CD4-positive, alpha-beta T cell (primary cell): ENCODE measurements at regions of chr6 and their contacts with region 1.

Region 1: DNA sequence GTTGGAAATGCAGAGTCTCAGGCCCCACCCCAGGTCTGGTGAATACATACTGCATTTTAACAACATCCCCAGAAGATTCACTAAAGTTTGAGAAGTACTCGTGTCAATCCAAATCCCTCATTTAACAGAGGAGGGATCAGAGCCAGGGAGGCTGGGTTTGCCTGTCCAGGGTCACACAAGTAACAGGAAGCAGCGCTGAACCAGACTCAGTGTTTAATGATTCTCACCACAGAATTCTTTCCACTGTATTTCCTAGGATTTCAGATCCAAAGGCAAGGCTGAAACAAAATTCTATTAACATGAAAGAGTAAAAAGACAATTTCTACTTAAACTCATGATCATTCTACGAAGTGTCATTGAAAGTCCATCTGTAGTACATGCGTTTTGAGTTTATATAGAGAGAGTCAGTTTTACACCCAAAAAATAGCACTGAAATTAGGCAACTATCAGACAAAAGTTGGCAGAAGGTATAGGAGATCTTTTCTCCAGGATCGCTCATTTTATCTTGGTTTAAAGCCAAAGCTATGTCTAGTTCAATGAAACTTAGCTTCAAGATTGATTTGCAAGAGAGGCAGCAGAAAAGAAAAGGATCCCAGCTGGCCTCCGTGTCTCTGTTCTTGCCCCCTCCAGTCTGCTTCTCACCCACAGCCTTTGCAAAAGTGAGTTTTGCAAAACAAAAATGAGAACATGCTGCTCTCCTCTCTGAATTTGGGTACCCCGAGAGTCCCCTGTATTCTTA is 6.0 kb upstream of the AGPAT4 start:
- DNase-seq: no peak
- ATAC-seq: no peak
- H3K4me3 ChIP-seq: no peak overlapping the region
- H3K4me3 Mint-ChIP-seq: no peak overlapping the region
- H3K27ac ChIP-seq: no peak overlapping the region
- H3K27ac Mint-ChIP-seq: no peak overlapping the region
- H3K4me1 ChIP-seq: no peaks in the 10 kb centered on the region
- H3K4me1 Mint-ChIP-seq: no peaks in the 10 kb centered on the region
- H3K27me3 ChIP-seq: no peaks in the 10 kb centered on the region
- H3K27me3 Mint-ChIP-seq: no peaks in the 10 kb centered on the region
- CTCF ChIP-seq: no peak

Region 2: GRCh38 chr6:161308075-161308655 is 28.3 kb after region 1 on chr6:
- CTCF ChIA-PET with region 1: no interaction called
- POLR2A ChIA-PET with region 1: no interaction called
- intact Hi-C with region 1: no loop called
- DNase-seq: no peak
- ATAC-seq: no peak
- H3K4me3 ChIP-seq: no peak overlapping the region
- H3K4me3 Mint-ChIP-seq: no peak overlapping the region
- H3K27ac ChIP-seq: no peak overlapping the region
- H3K27ac Mint-ChIP-seq: no peak overlapping the region
- H3K4me1 ChIP-seq: no peaks in the 10 kb centered on the region
- H3K4me1 Mint-ChIP-seq: no peaks in the 10 kb centered on the region
- H3K27me3 ChIP-seq: no peaks in the 10 kb centered on the region
- H3K27me3 Mint-ChIP-seq: no peaks in the 10 kb centered on the region
- CTCF ChIP-seq: no peak

Region 3: DNA sequence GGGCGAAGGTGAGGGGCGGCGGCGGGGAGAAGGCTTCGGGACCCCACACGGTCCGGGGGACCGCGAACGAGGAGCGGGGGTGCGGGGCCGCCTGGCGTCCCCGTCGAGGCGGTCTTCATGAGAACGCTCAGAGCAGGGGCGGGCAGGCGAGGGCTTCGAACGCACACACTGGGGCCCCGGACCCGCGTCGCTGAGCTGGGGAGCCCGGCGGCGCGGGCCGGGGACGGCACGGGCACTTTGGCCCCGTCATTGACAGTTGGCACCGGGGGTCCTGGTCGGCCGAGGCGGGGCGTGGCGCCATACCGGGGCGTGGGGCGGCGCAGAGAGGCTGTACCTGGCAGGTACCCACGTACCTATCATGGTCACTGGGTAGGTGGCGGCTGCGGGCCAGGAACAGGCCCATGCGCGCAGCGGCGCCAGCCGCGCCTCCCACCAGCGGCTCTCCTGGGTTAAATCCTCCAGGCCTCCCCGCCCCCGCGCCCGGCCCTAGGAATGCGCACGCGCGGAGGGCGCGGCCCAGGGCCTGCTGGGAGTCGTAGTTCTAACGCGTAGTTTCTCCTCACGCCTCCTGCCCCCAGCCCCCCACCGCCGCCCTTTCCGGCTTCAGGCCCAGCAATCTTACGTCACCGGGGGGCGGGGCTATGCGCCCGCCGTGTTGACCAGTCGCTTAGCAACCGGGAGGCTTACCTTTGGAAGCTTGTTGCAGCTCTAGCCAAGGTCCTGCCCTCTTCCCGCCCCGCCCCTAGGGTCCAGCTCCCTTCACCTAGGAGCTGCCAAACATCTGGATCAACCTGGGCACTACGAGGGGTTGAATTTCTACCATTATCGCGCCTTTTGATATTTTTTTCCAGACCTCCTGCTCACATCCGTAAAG is 1447.7 kb after region 1 on chr6 and contains the starts of genes PACRG and PRKN:
- CTCF ChIA-PET with region 1: no interaction called
- POLR2A ChIA-PET with region 1: no interaction called
- intact Hi-C with region 1: loop called in 1 of 2 experiments (anchors 5 kb)
- DNase-seq: peak; percentile 96 to 99 (median 98)
- ATAC-seq: peak; percentile 95
- H3K4me3 ChIP-seq: peak within 1 kb of the TSS; percentile 60
- H3K4me3 Mint-ChIP-seq: peak within 1 kb of the TSS; percentile 94
- H3K27ac ChIP-seq: peak within 1 kb of the TSS; percentile 61 to 82
- H3K27ac Mint-ChIP-seq: peak within 1 kb of the TSS; percentile 86
- H3K4me1 ChIP-seq: peaks cover 14% of the 10 kb centered on the region
- H3K4me1 Mint-ChIP-seq: peaks cover 18% of the 10 kb centered on the region
- H3K27me3 ChIP-seq: no peaks in the 10 kb centered on the region
- H3K27me3 Mint-ChIP-seq: no peaks in the 10 kb centered on the region
- CTCF ChIP-seq: no peak
- total RNA-seq, gene PACRG: 0.66 to 0.81 TPM
- total RNA-seq, gene PRKN: 5.2 to 5.4 TPM